AG04449 (cell line): ENCODE measurements at regions of chr1 and their contacts with region 1.

Region 1: DNA sequence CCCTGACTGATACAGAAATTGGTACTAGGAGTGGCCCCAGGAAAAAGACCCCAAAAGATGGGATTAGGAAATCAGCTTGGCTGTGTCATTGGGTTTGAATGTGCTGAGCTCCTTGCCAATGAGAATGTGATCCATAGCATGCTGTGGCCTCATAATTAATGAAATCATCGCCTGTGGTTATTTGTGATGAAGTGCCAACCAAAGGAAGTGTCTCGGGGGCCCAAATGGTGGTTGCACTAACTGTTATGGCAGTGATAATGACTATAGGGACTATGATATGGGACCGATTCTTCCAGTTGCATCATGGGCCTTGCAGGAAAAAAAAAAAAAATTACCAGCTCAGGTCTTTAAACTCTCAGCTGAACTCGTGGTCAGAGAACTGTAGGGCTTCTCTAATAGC is 15.4 kb upstream of the ZDHHC18 start:
- DNase-seq: no peak
- H3K4me3 ChIP-seq: no peak overlapping the region
- CTCF ChIP-seq: no peak

Region 2: DNA sequence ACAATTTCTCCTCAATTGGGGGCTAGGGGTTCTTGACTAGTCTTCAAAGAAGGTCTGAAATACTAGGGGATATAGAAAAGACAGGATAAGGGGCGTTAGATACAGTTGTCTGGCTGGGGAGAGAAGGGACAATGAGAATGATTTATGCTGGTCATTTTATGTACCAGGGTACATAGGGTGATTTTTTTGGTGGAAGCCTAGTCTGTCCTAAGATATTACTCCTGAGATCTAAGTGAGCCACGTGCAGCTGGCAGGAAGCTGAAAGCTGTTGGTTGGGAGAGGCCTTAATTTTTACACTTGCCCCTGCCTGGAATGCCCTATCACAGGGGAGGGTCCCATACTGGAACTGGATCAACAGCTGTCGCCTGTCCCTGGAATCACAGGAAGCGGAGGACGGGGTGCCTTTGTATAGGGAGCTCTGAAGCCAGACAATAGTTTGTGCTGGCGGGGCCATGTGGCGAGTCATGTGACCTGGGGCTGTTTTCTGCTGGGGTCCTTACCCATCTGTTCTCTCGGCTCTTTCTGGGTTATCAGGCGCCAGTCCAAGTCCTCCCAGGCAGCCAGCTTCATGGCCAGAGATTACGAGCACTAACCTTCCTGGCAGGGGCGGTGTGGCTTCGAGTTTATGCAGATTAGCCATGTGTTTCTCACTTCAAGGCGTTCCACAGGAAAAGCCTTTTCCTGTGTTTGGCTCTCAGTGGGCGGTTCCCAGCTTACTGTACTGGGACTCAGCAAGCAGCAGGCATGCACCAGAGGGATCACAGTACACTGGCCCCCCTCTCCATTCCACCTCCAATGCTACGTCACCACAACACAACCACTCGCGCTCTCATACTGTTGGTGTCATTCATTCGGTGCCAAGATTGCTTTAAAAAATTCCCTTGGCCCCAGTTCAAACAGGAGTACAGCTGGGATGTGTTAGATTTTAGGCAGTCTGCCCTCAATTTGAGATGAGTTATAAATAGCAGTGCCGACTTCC is 87.8 kb before region 1 on chr1:
- CTCF ChIA-PET with region 1: no interaction called
- POLR2A ChIA-PET with region 1: no interaction called
- DNase-seq: peak; percentile 96
- H3K4me3 ChIP-seq: no peak overlapping the region; the same call in 1 of the 2 replicates
- CTCF ChIP-seq: no peak

Region 3: GRCh38 chr1:26799479-26800142 is 11.4 kb before region 1 on chr1:
- CTCF ChIA-PET with region 1: interaction called, 61 read pairs
- POLR2A ChIA-PET with region 1: no interaction called
- DNase-seq: no peak
- H3K4me3 ChIP-seq: peak overlapping the region; percentile 24; the same call in 1 of the 2 replicates
- CTCF ChIP-seq: peak; percentile 9

Region 4: DNA sequence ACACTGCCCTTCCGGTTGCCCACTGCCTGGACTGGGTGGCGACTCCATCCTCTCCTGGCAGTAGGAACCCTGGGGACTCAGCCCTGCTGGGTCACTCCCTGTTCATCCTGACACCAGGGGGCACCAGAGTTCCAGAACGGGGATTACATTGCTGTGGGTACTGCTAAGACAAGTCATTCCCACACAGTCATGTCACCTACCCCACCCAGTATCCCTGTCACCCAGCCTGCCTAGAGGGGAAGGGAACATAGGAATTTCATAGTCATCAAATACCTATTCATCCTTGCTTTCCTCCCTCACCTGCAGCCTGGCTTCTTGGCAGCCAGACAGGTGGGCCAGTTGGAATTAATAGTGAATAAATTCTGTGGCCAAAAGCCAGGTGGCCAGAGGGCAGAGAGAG is 42.1 kb after region 1 on chr1:
- CTCF ChIA-PET with region 1: interaction called, 20 read pairs
- POLR2A ChIA-PET with region 1: no interaction called
- DNase-seq: peak; percentile 26
- H3K4me3 ChIP-seq: no peak overlapping the region
- CTCF ChIP-seq: peak; percentile 88

Region 5: DNA sequence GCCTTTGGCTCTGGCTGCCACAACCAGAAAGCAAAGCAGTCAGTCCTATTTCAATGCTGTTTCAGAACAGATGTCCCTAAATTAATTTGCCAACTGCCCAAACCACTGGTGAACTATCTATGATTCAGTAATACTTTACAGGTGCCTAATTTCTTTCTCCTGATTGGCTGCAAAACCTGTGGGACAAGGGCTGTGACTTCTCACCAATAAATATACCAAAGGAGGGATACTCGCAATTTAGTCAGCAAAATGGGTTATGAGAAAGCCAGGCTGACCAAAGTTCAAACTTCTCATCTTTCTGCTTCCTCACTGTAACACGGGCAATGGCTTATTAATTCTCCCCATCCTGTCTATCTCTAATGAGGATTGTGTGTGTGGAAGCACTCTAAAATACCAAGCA is 66.3 kb after region 1 on chr1:
- CTCF ChIA-PET with region 1: interaction called, 62 read pairs
- POLR2A ChIA-PET with region 1: no interaction called
- DNase-seq: no peak
- H3K4me3 ChIP-seq: no peak overlapping the region
- CTCF ChIP-seq: no peak